Activated CD4-positive, alpha-beta T cell treated with anti-CD3 and anti-CD28 coated beads for 36 hours (primary cell): ENCODE measurements at regions of chr2 and their contacts with region 1.

Region 1: DNA sequence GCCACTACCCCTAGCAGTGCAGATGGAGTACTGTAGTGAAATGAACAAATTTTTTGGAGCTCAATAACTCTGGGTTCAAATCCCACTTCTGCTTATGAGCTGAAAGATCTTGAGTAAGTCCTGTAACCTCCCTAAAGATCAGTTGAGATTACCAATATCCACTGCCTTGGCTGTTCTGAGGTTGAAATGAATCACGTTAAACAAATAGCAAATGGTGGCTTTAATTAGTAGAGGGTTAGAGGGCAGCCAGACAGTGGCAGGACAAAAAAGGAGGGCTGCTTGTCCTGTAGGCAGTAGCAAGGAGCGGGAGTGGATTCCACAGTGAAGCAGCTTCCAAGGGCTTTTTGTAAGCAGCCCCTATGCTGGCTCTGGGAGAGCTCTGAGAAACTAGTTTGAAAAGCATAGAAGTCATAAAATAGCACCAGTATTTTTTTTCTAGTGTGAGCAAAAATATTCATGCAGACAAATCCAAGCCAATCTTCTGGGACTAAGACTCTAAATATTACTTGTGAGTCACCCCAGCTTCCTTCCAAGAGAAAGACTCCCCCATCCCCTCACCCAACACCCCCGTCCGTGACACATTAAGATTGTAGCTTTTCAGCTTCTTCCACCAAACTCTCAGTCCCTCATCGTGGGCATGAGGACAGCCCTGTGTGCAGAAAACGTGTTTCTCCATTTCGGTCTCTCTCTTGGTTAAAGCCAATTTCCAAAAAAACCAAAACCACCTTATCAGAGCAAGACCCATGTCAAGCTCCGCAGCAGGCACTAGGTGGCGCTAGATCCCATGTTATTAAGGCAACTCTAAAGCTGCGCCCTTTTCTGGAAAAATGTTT is 123.5 kb upstream of the LGALSL start:
- DNase-seq: peak; percentile 87
- ATAC-seq: no peak
- H3K4me3 Mint-ChIP-seq: peak overlapping the region; percentile 8
- H3K27ac Mint-ChIP-seq: no peak overlapping the region
- H3K4me1 Mint-ChIP-seq: peaks cover 48% of the 10 kb centered on the region
- H3K27me3 Mint-ChIP-seq: no peaks in the 10 kb centered on the region

Region 2: DNA sequence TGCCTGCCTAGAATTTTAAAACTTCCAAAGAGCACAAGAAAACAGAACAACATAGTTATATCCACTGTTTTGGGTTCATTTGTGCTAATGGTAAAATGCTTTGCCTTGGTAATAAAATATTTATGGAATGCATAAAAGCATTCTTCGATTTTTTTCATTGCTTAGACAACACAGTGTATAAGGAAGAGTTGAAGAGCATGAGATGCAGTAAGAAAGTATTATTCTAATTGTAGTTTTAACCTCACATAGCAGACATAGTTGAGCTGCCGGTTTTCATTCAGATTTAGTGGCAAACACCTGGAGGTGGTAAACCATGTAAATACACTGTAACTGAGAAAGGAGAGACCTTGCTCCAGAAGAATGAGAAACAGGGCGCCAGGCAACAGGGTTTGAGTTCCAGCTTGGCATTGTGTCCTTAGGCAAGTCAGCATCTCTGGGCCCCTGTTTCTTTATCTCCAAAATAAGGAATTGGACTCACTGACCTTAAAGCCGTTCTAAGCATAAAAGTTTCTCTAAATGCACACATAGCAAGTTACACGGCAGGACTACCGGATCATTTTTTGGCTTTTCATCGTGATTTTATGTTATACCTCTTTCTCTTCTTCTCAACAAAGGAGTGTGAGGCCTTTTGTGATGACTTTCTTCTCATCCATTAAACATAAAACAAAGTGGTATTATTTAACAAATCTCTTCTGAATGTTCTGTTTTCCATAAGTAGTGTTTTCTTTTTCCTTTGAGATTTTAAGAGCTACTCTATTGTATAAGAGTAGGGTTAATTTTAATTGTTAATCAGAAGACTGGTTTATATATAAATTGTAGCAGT is 480.9 kb before region 1 on chr2:
- CTCF ChIA-PET with region 1: no interaction called
- POLR2A ChIA-PET with region 1: no interaction called
- intact Hi-C with region 1: no loop called
- DNase-seq: no peak
- ATAC-seq: no peak
- H3K4me3 Mint-ChIP-seq: no peak overlapping the region
- H3K27ac Mint-ChIP-seq: no peak overlapping the region
- H3K4me1 Mint-ChIP-seq: peaks cover 63% of the 10 kb centered on the region
- H3K27me3 Mint-ChIP-seq: no peaks in the 10 kb centered on the region

Region 3: DNA sequence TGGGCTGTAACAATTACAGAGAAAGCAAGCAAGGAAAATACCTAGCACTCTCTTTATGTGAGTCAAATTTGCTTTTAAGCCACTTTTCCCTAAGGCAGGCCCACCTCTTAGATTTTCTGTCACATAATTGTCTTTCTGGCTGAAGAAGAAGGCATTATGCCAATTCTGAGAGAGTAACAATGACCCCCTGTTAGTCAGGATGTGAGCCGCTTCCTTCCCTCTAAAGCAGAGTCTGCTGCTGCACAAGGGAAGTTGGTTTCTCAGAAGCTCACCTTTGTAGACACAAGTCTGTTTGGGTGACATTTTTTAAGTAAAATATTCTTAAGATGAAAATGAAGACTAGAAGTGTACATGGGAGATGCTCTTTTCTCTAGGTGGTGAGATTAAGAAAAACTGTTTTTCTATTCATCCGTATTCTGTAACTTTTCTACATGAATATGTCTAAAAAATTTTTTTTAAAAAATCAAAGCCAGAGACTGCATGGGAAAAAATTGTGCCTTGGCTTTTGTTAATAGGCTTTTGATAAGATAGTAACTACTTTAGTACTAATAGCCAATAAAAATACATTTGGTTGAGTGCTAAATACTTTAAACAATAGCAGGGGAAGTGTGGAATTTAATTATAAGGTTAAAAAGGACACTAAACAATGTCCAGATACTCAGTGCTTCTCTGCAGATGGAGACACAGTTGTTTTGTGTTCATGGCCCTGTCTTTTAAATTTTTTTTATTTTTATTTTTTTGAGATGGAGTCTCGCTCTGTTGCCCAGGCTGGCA is 277.8 kb before region 1 on chr2:
- CTCF ChIA-PET with region 1: interaction called, 172 read pairs
- POLR2A ChIA-PET with region 1: interaction called, 5 read pairs
- intact Hi-C with region 1: loop called (anchors 1 kb)
- DNase-seq: no peak
- ATAC-seq: no peak
- H3K4me3 Mint-ChIP-seq: no peak overlapping the region
- H3K27ac Mint-ChIP-seq: no peak overlapping the region
- H3K4me1 Mint-ChIP-seq: peaks cover 40% of the 10 kb centered on the region
- H3K27me3 Mint-ChIP-seq: no peaks in the 10 kb centered on the region

Region 4: DNA sequence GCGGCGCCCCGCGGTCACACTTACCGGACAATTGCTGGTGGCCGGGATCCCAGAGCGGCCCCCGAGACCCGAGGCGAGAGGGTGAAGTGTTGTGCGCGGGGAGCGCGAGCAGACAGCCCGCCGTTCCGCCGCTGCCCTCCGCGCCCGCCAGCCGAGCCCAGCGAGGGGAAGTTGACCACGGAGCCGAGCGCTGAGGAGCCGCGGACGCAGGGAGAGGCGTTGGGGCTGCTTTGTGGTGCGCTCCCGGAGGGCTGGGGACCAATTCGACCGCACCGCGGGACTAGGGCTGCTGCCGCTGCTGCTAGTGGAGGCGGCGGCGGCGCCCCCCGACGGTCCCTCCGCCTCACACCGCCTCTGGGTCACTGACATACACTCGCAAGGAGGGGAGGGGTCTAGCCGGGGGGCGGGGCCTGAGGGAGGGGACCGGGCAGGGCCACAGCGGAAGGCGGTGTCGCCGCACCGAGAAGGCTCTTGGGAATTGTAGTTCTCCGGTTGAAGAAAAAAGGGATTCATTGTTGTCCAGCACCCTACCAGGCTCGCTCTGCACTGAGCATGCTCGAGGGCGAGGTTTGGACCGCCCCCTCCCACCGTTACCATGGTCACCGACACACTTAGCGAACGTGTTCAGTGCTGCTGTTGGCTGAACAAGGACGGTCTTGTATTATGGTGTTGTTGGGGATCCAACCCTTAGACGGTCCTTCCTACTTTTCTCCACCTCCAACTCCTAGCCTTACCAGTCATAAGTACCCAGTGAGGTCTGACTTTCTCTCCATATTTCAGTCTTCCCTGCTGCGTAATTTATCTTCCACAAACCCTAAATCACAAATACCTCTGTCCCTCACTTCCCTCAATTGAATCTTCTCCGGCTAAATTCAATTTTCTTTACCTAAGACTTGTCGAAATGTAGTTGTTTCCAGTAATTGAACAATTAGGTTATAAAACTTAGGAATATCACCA is 186.2 kb before region 1 on chr2 and contains the start of gene PELI1:
- CTCF ChIA-PET with region 1: interaction called, 7 read pairs
- POLR2A ChIA-PET with region 1: interaction called, 3 read pairs
- intact Hi-C with region 1: loop called (anchors 1 kb)
- DNase-seq: peak; percentile 97
- ATAC-seq: peak; percentile 89
- H3K4me3 Mint-ChIP-seq: peak within 1 kb of the TSS; percentile 84
- H3K27ac Mint-ChIP-seq: peak within 1 kb of the TSS; percentile 97
- H3K4me1 Mint-ChIP-seq: peaks cover 30% of the 10 kb centered on the region
- H3K27me3 Mint-ChIP-seq: no peaks in the 10 kb centered on the region
- total RNA-seq, gene PELI1: 21.3 to 29.7 TPM

Region 5: GRCh38 chr2:64295326-64296139 is 35.0 kb before region 1 on chr2:
- CTCF ChIA-PET with region 1: interaction called, 30 read pairs
- POLR2A ChIA-PET with region 1: interaction called, 6 read pairs
- intact Hi-C with region 1: loop called (anchors 1 kb)
- DNase-seq: peak; percentile 80
- ATAC-seq: peak; percentile 98
- H3K4me3 Mint-ChIP-seq: no peak overlapping the region
- H3K27ac Mint-ChIP-seq: no peak overlapping the region
- H3K4me1 Mint-ChIP-seq: peaks cover 20% of the 10 kb centered on the region
- H3K27me3 Mint-ChIP-seq: peaks cover 4% of the 10 kb centered on the region

Region 6: GRCh38 chr2:64501946-64502345 is 171.4 kb after region 1 on chr2:
- CTCF ChIA-PET with region 1: interaction called, 11 read pairs
- POLR2A ChIA-PET with region 1: no interaction called
- intact Hi-C with region 1: no loop called
- DNase-seq: no peak
- ATAC-seq: no peak
- H3K4me3 Mint-ChIP-seq: no peak overlapping the region
- H3K27ac Mint-ChIP-seq: no peak overlapping the region
- H3K4me1 Mint-ChIP-seq: peaks cover 5% of the 10 kb centered on the region
- H3K27me3 Mint-ChIP-seq: peaks cover 7% of the 10 kb centered on the region

Region 7: GRCh38 chr2:64625299-64626145 is 295.0 kb after region 1 on chr2:
- CTCF ChIA-PET with region 1: no interaction called
- POLR2A ChIA-PET with region 1: no interaction called
- intact Hi-C with region 1: no loop called
- DNase-seq: no peak
- ATAC-seq: peak; percentile 30
- H3K4me3 Mint-ChIP-seq: no peak overlapping the region
- H3K27ac Mint-ChIP-seq: no peak overlapping the region
- H3K4me1 Mint-ChIP-seq: no peaks in the 10 kb centered on the region
- H3K27me3 Mint-ChIP-seq: no peaks in the 10 kb centered on the region

Region 8: GRCh38 chr2:64865073-64865830 is 534.8 kb after region 1 on chr2:
- CTCF ChIA-PET with region 1: interaction called, 5 read pairs
- POLR2A ChIA-PET with region 1: no interaction called
- intact Hi-C with region 1: loop called (anchors 2 kb)
- DNase-seq: peak; percentile 78
- ATAC-seq: peak; percentile 74
- H3K4me3 Mint-ChIP-seq: peak overlapping the region; percentile 52
- H3K27ac Mint-ChIP-seq: no peak overlapping the region
- H3K4me1 Mint-ChIP-seq: no peaks in the 10 kb centered on the region
- H3K27me3 Mint-ChIP-seq: peaks cover 6% of the 10 kb centered on the region